Activated T-helper 2 cell treated with anti-CD3 and anti-CD28 coated beads, Interferon-gamma antibody, Interleukin-2, Interleukin-4, amounts not matched to agents 10 μg/mL and 5 μg/mL and 100 μg/mL, durations not matched to agents 14 hours and 24 hours and 36 hours (primary cell): ENCODE measurements at regions of chrX and their contacts with region 1.

Region 1: GRCh38 chrX:41796577-41796976 is 72.6 kb downstream of the GPR82 start:
- DNase-seq: no peak
- H3K4me3 Mint-ChIP-seq: no peak overlapping the region
- H3K27ac Mint-ChIP-seq: no peak overlapping the region
- H3K4me1 Mint-ChIP-seq: peaks cover 17% of the 10 kb centered on the region
- H3K27me3 Mint-ChIP-seq: no peaks in the 10 kb centered on the region

Region 2: GRCh38 chrX:41870719-41871151 is 74.2 kb after region 1 on chrX:
- intact Hi-C with region 1: no loop called
- DNase-seq: no peak
- H3K4me3 Mint-ChIP-seq: no peak overlapping the region
- H3K27ac Mint-ChIP-seq: no peak overlapping the region
- H3K4me1 Mint-ChIP-seq: peaks cover 6% of the 10 kb centered on the region
- H3K27me3 Mint-ChIP-seq: no peaks in the 10 kb centered on the region

Region 3: GRCh38 chrX:42955349-42955748 is 1158.8 kb after region 1 on chrX:
- intact Hi-C with region 1: loop called (anchors 10 kb)
- DNase-seq: no peak
- H3K4me3 Mint-ChIP-seq: no peak overlapping the region
- H3K27ac Mint-ChIP-seq: no peak overlapping the region
- H3K4me1 Mint-ChIP-seq: peaks cover 8% of the 10 kb centered on the region
- H3K27me3 Mint-ChIP-seq: no peaks in the 10 kb centered on the region